ENCODE measurements at regions of chr17 and their contacts with region 1.

Region 1: GRCh38 chr17:39754161-39754951 is 16.6 kb downstream of the GRB7 start:
- DNase-seq: peak; percentile 99
- H3K4me3 ChIP-seq: peak overlapping the region; percentile 67
- H3K27ac ChIP-seq: peak overlapping the region; percentile 99
- H3K4me1 ChIP-seq: peaks cover 73% of the 10 kb centered on the region
- CTCF ChIP-seq: peak; percentile 76

Region 2: GRCh38 chr17:39621523-39622379 is 132.6 kb before region 1 on chr17:
- CTCF ChIA-PET with region 1: interaction called, 5 read pairs
- POLR2A ChIA-PET with region 1: interaction called, 3 read pairs
- intact Hi-C with region 1: loop called (anchors 1 kb)
- DNase-seq: peak; percentile 87
- H3K4me3 ChIP-seq: peak overlapping the region; percentile 36
- H3K27ac ChIP-seq: peak overlapping the region; percentile 53
- H3K4me1 ChIP-seq: peaks cover 37% of the 10 kb centered on the region
- CTCF ChIP-seq: peak; percentile 100

Region 3: GRCh38 chr17:39653662-39654331 is 100.6 kb before region 1 on chr17:
- CTCF ChIA-PET with region 1: no interaction called
- POLR2A ChIA-PET with region 1: no interaction called
- intact Hi-C with region 1: no loop called
- DNase-seq: peak; percentile 62
- H3K4me3 ChIP-seq: no peak overlapping the region
- H3K27ac ChIP-seq: no peak overlapping the region
- H3K4me1 ChIP-seq: no peaks in the 10 kb centered on the region
- CTCF ChIP-seq: peak; percentile 99

Region 4: DNA sequence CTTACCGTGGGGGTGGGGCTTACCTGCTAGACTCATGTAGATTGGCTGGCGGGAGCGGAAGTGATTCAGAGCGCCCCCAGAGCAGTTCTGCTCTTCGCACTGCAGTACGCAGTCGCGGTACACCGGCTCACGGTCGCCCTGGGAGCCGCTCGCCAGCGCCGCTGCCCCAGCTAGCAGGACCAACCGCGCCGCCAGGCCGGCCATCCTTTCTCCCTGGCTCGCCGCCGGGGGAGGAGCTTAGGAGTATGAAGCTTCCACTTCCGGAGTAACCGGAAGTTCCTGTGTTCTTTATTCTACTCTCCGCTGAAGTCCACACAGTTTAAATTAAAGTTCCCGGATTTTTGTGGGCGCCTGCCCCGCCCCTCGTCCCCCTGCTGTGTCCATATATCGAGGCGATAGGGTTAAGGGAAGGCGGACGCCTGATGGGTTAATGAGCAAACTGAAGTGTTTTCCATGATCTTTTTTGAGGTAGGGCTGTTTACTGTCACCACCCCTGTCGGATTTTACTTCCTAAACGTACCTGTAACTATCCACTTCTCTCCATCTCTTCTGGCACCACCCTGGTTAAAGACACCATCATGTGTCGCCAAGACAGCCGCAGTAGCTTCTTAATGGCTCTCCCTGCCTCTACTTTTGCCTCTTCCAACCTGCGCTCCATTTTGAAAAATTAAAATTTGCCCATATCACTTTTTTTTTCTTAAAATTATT is 66.4 kb before region 1 on chr17 and contains the start of gene PGAP3:
- CTCF ChIA-PET with region 1: no interaction called
- POLR2A ChIA-PET with region 1: interaction called, 4 read pairs
- intact Hi-C with region 1: loop called (anchors 5 kb)
- DNase-seq: peak; percentile 96
- H3K4me3 ChIP-seq: peak within 1 kb of the TSS; percentile 89
- H3K27ac ChIP-seq: peak within 1 kb of the TSS; percentile 91
- H3K4me1 ChIP-seq: peaks cover 17% of the 10 kb centered on the region
- CTCF ChIP-seq: peak; percentile 32; the same call in 1 of the 2 replicates
- total RNA-seq, gene PGAP3: 4.5 and 8.7 TPM in 2 replicates

Region 5: DNA sequence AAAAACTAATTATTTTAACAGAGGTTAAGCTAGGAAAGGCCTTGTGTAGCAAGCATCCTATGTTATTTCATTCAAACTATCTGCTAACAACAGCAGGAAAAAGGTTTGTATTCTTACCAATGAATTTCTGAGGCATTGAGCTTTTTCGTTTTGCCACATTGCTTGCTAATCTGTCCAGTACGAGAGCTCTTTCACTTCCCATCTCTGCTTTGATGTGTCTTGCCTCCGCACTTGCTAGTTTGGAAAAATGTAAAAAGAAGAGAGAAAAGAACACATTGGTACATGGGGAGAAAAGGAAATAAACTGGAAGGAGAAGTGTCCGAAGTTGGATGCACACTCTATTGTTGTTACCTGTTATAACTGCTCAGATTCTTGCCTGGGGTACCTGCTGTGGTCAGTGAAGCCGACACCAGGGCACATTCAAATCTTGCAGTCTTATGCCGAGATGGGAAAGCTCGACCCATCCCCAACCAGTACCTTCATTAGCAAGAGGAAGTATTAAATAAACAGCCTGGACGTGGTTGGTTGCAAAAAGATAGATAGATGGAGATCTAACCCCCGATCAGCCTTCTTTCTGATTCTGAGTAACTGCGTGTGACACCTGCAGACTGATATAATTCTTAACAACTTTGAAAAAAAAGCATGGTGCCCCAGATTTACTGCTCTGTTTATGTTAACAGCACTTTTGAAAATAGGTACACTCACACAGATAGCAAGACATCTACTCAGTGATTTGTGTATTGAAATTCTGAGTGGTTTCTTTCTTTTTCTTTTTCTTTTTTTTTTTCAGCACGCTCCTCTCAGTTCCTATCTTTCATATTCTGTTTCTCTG is 23.4 kb after region 1 on chr17:
- CTCF ChIA-PET with region 1: interaction called, 3 read pairs
- POLR2A ChIA-PET with region 1: interaction called, 24 read pairs
- intact Hi-C with region 1: loop called (anchors 1 kb)
- DNase-seq: peak; percentile 63
- H3K4me3 ChIP-seq: peak overlapping the region; percentile 74
- H3K27ac ChIP-seq: peak overlapping the region; percentile 94
- H3K4me1 ChIP-seq: peaks cover 91% of the 10 kb centered on the region
- CTCF ChIP-seq: 0 out of 2 replicates have a peak, but pooled peaks have one; percentile 3

Region 6: GRCh38 chr17:39863918-39864746 is 109.8 kb after region 1 on chr17 and contains the start of gene IKZF3:
- CTCF ChIA-PET with region 1: no interaction called
- POLR2A ChIA-PET with region 1: interaction called, 27 read pairs
- intact Hi-C with region 1: loop called (anchors 1 kb)
- DNase-seq: peak; percentile 82
- H3K4me3 ChIP-seq: peak within 1 kb of the TSS; percentile 85
- H3K27ac ChIP-seq: peak within 1 kb of the TSS; percentile 89
- H3K4me1 ChIP-seq: peaks cover 50% of the 10 kb centered on the region
- CTCF ChIP-seq: peak; percentile 69
- total RNA-seq, gene IKZF3: 44.7 and 54.7 TPM in 2 replicates

Region 7: GRCh38 chr17:39980351-39981206 is 226.2 kb after region 1 on chr17 and contains the start of gene PSMD3:
- CTCF ChIA-PET with region 1: no interaction called
- POLR2A ChIA-PET with region 1: interaction called, 3 read pairs
- intact Hi-C with region 1: loop called (anchors 1 kb)
- DNase-seq: peak; percentile 100
- H3K4me3 ChIP-seq: peak within 1 kb of the TSS; percentile 96
- H3K27ac ChIP-seq: peak within 1 kb of the TSS; percentile 64
- H3K4me1 ChIP-seq: peaks cover 23% of the 10 kb centered on the region
- CTCF ChIP-seq: peak; percentile 79
- total RNA-seq, gene PSMD3: 149 and 150 TPM in 2 replicates

Measured in OCI-LY7 (cell line).